GM12878 (cell line): ENCODE measurements at regions of chr22 and their contacts with region 1.

Region 1: DNA sequence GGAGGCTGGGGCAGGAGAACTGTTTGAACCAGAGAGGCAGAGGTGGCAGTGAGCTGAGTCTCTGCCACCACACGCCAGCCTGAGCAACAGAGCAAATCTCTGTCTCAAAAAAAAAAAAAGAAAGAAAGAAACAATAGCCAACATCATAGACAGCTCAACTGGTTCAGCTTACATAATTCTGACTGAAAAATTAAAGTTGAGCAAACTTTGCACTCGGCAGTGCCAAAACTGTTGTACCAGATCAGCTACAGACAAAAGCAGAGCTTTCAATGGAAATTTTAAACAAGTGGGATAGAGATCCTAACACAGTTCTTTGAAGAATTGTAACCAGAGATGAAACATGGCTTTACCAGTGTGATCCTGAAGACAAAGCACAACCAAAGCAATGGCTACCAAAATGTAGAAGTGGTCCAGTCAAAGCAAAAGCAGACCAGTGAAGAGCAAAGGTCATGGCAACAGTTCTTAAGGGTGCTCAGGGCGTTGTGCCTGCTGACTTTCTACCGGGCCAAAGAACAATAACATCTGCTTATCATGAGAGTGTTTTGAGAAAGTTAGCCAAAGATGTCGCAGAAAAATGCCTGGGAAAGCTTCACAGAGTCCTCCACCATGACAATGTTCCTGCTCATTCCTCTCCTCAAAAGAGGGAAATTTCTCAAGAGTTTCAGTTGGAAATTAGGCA is 59.3 kb downstream of the TTC28 start:
- DNase-seq: no peak
- ATAC-seq: no peak
- H3K4me3 ChIP-seq: no peak overlapping the region
- H3K27ac ChIP-seq: no peak overlapping the region
- H3K4me1 ChIP-seq: no peaks in the 10 kb centered on the region
- H3K27me3 ChIP-seq: no peaks in the 10 kb centered on the region
- CTCF ChIP-seq: no peak
- EP300 ChIP-seq: no peak
- POLR2A ChIP-seq: no peak
- RAD21 ChIP-seq: no peak

Region 2: DNA sequence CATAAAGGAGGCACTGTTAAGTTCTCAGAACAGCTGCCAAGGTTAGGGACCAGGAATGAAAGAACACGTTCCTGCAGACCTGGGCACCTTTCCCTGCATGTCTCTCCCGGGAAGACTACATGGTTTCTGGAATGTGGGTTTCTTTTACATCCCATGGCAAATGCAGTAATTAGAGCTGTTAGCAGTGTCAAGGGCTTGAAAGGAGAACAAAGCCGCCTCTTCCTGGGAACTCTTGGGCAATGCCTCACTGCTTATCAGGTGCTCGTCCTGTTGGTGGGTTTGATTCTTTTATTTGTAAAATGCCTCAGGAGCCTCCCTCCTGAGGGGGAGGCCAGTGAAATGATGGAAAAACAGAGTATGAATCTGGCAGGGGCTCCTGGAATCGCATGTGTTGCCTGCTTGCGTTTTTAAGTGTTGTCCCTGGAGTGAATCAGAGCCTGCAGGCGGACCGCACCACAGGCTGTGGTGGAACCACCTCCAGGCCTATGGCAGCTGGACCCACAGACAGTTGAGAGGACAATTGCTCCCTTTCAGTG is 442.0 kb after region 1 on chr22:
- CTCF ChIA-PET with region 1: no interaction called
- POLR2A ChIA-PET with region 1: interaction called, 11 read pairs
- RAD21 ChIA-PET with region 1: no interaction called
- SMC1A ChIA-PET with region 1: no interaction called
- in situ Hi-C with region 1: no loop called
- intact Hi-C with region 1: no loop called
- DNase-seq: no peak
- ATAC-seq: no peak
- H3K4me3 ChIP-seq: no peak overlapping the region
- H3K27ac ChIP-seq: no peak overlapping the region
- H3K4me1 ChIP-seq: no peaks in the 10 kb centered on the region
- H3K27me3 ChIP-seq: peaks cover 0 to 11% of the 10 kb centered on the region in 2 experiments; a peak in 1 of 4 replicates
- CTCF ChIP-seq: no peak
- EP300 ChIP-seq: no peak
- POLR2A ChIP-seq: no peak
- RAD21 ChIP-seq: no peak